Upper lobe of right lung (tissue), 1 donor: ENCODE measurements at regions of chr3 and their contacts with region 1.

Region 1: DNA sequence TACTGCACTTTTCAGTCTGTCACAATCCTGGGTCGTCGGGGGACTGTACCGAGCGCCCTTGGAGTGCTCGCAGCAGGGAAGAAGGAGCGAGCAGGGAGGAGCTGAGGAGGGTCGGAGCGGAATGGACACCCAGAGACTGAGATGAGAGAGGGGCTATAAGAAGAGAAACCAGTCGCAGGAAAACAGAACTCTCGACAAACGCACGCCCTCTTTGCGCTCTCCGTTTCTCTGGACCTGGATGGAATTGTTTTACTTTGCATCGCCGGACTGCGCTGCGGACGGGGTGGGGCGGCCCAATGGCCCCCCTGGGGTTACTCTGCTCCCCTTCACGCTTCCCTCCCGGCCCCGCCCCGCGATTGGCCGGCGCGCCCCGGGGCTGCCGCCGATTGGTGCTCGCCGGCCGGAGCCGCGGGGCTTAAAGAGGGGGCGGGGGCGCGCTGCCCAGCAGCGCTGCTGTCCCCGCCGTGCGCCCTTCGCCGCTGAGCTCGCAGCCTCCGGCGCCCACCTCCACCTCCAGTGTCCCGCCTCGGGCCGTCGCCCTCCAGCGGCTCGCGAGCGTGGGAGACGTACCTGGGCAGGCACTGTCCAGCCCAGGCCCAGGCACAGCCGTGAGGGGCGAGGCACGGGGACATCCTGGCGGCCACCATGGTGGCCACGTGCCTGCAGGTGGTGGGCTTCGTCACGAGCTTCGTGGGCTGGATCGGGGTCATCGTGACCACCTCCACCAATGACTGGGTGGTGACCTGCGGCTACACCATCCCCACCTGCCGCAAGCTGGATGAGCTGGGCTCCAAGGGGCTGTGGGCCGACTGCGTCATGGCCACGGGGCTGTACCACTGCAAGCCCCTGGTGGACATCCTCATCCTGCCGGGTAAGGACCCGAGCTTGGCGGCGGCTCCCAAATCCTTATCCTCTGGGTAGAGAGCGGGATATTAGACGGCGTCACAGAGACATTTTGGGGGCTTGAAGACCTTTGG is at the start of gene CLDN11:
- DNase-seq: no peak
- ATAC-seq: peak; percentile 64
- H3K4me3 ChIP-seq: peak within 1 kb of the TSS; percentile 53
- H3K27ac ChIP-seq: peak within 1 kb of the TSS; percentile 75
- H3K4me1 ChIP-seq: peaks cover 14% of the 10 kb centered on the region
- H3K27me3 ChIP-seq: peaks cover 18% of the 10 kb centered on the region
- CTCF ChIP-seq: no peak
- total RNA-seq, gene CLDN11: 11.7 TPM

Region 2: DNA sequence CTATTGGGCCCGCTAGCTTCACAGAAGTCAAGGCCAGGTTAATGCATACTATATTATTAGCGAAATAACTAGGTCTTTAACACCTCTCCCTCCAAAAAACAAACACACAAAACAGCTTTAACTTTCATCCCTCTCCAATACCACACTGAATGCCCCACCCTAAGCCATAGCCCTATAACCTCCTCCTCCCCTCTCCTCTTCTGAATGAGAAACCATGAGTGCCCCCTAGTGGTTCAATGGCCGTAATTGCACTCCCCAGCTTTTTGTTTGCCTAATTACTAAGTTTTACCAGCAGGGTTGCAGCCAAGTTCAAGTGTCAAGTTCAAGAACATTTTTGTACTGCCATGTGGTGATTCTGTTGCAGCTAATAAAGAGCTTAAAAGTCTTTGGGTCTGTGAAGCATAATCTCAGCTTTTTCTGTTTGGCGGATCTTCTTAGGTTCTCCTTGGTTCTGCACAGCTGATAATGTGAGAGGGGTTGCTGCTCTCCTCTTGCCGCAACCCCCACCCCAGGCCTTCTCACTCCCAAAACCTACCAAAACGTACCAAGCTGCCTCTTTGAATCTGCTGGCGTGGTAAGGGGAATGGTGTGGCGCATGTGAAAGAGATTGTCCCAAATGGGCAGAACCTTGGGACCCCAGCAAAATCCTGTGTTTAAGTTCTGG is 393.4 kb after region 1 on chr3:
- intact Hi-C with region 1: loop called (anchors 5 kb)
- DNase-seq: no peak
- ATAC-seq: peak; percentile 95
- H3K4me3 ChIP-seq: no peak overlapping the region
- H3K27ac ChIP-seq: no peak overlapping the region
- H3K4me1 ChIP-seq: peaks cover 5% of the 10 kb centered on the region
- H3K27me3 ChIP-seq: no peaks in the 10 kb centered on the region
- CTCF ChIP-seq: peak; percentile 91